Activated naive CD4-positive, alpha-beta T cell treated with anti-CD3 and anti-CD28 coated beads for 36 hours (primary cell): ENCODE measurements at regions of chr7 and their contacts with region 1.

Region 1: DNA sequence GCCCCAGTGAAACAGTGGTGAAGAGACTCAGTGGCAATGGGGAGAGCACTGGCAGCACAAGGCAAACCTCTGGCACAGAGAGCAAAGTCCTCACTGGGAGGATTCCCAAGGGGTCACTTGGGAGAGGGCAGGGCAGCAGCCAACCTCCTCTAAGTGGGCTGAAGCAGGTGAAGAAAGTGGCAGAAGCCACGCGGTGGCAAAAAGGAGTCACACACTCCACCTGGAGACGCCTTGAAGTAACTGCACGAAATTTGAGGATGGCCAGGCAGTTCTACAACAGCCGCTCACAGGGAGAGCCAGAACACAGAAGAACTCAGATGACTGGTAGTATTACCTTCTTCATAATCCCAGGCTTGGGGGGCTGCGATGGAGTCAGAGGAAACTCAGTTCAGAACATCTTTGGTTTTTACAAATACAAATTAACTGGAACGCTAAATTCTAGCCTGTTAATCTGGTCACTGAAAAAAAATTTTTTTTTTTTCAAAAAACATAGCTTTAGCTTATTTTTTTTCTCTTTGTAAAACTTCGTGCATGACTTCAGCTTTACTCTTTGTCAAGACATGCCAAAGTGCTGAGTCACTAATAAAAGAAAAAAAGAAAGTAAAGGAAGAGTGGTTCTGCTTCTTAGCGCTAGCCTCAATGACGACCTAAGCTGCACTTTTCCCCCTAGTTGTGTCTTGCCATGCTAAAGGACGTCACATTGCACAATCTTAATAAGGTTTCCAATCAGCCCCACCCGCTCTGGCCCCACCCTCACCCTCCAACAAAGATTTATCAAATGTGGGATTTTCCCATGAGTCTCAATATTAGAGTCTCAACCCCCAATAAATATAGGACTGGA is 435 bp upstream of the IL6 start:
- DNase-seq: peak; percentile 76
- H3K4me3 Mint-ChIP-seq: peak overlapping the region; percentile 70
- H3K27ac Mint-ChIP-seq: peak overlapping the region; percentile 89
- H3K4me1 Mint-ChIP-seq: peaks cover 30% of the 10 kb centered on the region
- H3K27me3 Mint-ChIP-seq: peaks cover 24% of the 10 kb centered on the region

Region 2: GRCh38 chr7:22551768-22552513 is 174.6 kb before region 1 on chr7:
- CTCF ChIA-PET with region 1: interaction called, 331 read pairs
- intact Hi-C with region 1: no loop called
- DNase-seq: peak; percentile 12
- H3K4me3 Mint-ChIP-seq: no peak overlapping the region
- H3K27ac Mint-ChIP-seq: no peak overlapping the region
- H3K4me1 Mint-ChIP-seq: peaks cover 10% of the 10 kb centered on the region
- H3K27me3 Mint-ChIP-seq: peaks cover 48% of the 10 kb centered on the region

Region 3: GRCh38 chr7:22565315-22565811 is 161.2 kb before region 1 on chr7:
- CTCF ChIA-PET with region 1: interaction called, 331 read pairs
- intact Hi-C with region 1: loop called (anchors 1 kb)
- DNase-seq: no peak
- H3K4me3 Mint-ChIP-seq: no peak overlapping the region
- H3K27ac Mint-ChIP-seq: no peak overlapping the region
- H3K4me1 Mint-ChIP-seq: peaks cover 45% of the 10 kb centered on the region
- H3K27me3 Mint-ChIP-seq: peaks cover 29% of the 10 kb centered on the region

Region 4: GRCh38 chr7:22672846-22673652 is 53.5 kb before region 1 on chr7:
- CTCF ChIA-PET with region 1: interaction called, 22 read pairs
- intact Hi-C with region 1: loop called (anchors 1 kb)
- DNase-seq: no peak
- H3K4me3 Mint-ChIP-seq: no peak overlapping the region
- H3K27ac Mint-ChIP-seq: no peak overlapping the region
- H3K4me1 Mint-ChIP-seq: peaks cover 64% of the 10 kb centered on the region
- H3K27me3 Mint-ChIP-seq: no peaks in the 10 kb centered on the region

Region 5: DNA sequence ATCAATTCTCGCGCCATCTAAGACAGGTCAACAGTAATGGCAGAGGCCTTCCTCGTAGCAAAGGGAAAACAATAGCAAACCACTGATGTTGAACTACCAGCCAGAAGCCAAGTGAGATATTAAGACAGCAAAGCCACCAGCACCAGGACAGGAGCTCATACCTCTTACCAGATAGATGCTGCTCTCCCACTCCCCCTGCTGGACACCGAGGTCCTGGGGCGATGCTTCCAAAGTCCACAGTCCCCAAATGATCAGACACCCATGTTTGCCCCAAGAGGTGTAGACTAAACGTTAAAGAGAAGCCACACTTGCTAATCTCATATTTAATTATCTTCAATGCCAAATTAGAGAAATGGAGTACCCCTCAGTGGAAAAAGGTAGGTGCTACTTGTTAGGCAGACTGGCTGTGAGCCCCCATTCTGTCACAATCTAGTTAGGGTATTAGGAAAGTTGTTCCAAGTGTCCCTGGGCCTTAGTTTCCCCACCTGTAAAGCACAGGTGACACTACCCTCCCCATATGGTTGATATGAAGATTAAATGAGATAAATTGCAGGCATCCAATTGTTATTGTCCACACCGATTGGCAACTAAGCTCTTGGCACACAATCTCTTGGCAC is 56.2 kb after region 1 on chr7:
- CTCF ChIA-PET with region 1: interaction called, 8 read pairs
- intact Hi-C with region 1: loop called (anchors 2 kb)
- DNase-seq: peak; percentile 88
- H3K4me3 Mint-ChIP-seq: no peak overlapping the region
- H3K27ac Mint-ChIP-seq: no peak overlapping the region
- H3K4me1 Mint-ChIP-seq: no peaks in the 10 kb centered on the region
- H3K27me3 Mint-ChIP-seq: no peaks in the 10 kb centered on the region

Region 6: GRCh38 chr7:23055582-23056178 is 329.1 kb after region 1 on chr7:
- CTCF ChIA-PET with region 1: interaction called, 10 read pairs
- intact Hi-C with region 1: loop called (anchors 1 kb)
- DNase-seq: peak; percentile 81
- H3K4me3 Mint-ChIP-seq: no peak overlapping the region
- H3K27ac Mint-ChIP-seq: no peak overlapping the region
- H3K4me1 Mint-ChIP-seq: peaks cover under 1% of the 10 kb centered on the region
- H3K27me3 Mint-ChIP-seq: no peaks in the 10 kb centered on the region